Aorta (tissue), 5 donors: ENCODE measurements at regions of chr12 and their contacts with region 1.

Region 1: DNA sequence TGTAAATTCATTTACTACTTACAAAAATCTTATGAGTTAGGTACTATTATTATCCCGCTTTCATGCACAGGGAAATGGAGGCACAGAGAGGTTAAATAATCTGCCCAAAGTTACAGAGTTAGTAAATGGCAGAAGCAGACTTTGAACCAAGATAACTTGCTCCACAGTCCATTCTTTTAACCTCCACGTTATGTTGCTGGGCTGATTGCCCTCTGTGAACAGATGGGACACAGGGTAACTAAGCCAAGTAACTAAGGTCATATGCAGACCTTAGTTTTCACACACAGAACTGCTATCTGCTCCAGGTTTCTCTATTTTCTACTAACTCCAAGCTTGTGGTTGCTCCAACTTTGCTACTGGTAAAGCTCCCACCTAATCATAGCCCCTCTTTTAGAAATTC is 147.1 kb upstream of the IFNG-AS1 start:
- DNase-seq: no peak
- ATAC-seq: no peak
- H3K4me3 ChIP-seq: no peak overlapping the region
- H3K27ac ChIP-seq: no peak overlapping the region
- H3K4me1 ChIP-seq: no peaks in the 10 kb centered on the region
- H3K27me3 ChIP-seq: no peaks in the 10 kb centered on the region

Region 2: GRCh38 chr12:67747869-67748742 is 94.0 kb before region 1 on chr12:
- intact Hi-C with region 1: no loop called
- DNase-seq: no peak
- ATAC-seq: no peak
- H3K4me3 ChIP-seq: no peak overlapping the region
- H3K27ac ChIP-seq: no peak overlapping the region
- H3K4me1 ChIP-seq: no peaks in the 10 kb centered on the region
- H3K27me3 ChIP-seq: no peaks in the 10 kb centered on the region

Region 3: DNA sequence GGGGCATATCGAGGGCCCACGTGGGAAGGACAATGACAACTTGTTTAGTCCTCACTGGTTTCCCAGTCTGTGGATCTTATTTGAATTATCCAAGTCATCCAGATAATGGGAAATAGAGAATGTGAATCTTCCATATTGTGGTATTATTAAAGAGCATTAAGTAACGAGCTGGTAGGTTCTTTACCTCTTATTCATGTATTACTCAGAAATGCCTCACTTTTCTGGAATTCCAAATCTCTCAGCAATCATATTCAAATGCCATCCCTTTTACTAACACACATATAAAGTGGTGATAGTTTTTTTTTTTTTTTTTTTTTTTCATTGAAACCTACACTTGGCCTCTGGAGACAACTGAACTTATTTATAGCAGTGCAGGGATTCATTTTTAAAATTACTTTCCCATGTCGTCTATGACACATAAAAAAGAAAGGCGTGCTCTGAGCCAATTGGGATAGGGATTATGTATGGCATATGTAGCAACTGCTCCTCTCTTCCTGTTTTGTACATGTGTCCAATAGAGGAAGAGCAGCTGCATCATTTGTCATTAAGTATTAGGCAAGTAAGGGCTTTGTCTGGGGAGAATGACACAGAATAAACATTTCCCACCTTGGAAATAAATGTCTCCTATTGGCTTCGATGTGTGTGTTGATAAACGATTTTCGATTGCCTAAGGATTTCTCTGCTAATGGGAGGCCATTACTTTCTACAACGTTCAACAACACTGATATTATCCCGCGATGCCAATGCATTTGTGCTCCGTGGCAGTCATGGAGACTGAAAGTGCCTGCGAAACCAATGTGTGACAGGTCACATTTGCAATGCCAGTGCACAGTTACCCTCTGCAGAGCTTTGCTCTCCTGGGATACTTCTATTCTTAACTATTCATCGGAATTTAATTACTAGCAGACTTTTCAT is 68.5 kb after region 1 on chr12:
- intact Hi-C with region 1: loop called in 1 of 2 experiments (anchors 2 kb)
- DNase-seq: no peak
- ATAC-seq: no peak
- H3K4me3 ChIP-seq: peak overlapping the region in 1 of 2 donors; percentile 34
- H3K27ac ChIP-seq: no peak overlapping the region
- H3K4me1 ChIP-seq: peaks cover 0 to 2% of the 10 kb centered on the region in 2 donors
- H3K27me3 ChIP-seq: no peaks in the 10 kb centered on the region